ENCODE measurements at regions of chr4 and their contacts with region 1.

Region 1: GRCh38 chr4:6591313-6591712 is 16.3 kb downstream of the MAN2B2 start:
- DNase-seq: no peak
- H3K4me3 ChIP-seq: no peak overlapping the region
- CTCF ChIP-seq: no peak

Region 2: GRCh38 chr4:6668381-6668780 is 77.1 kb after region 1 on chr4:
- in situ Hi-C with region 1: loop called (anchors 10 kb)
- DNase-seq: peak; percentile 69
- H3K4me3 ChIP-seq: no peak overlapping the region
- CTCF ChIP-seq: no peak

Measured in astrocyte of the cerebellum (primary cell).